ENCODE measurements at regions of chr6 and their contacts with region 1.

Region 1: GRCh38 chr6:116287689-116288282 is 8.1 kb upstream of the TSPYL1 start:
- DNase-seq: no peak
- CTCF ChIP-seq: peak; percentile 87

Region 2: GRCh38 chr6:116175344-116175743 is 112.4 kb before region 1 on chr6:
- CTCF ChIA-PET with region 1: no interaction called
- POLR2A ChIA-PET with region 1: no interaction called
- DNase-seq: no peak
- CTCF ChIP-seq: no peak

Region 3: GRCh38 chr6:116304538-116305097 is 16.8 kb after region 1 on chr6:
- CTCF ChIA-PET with region 1: interaction called, 26 read pairs
- POLR2A ChIA-PET with region 1: no interaction called
- DNase-seq: no peak
- CTCF ChIP-seq: no peak

Region 4: DNA sequence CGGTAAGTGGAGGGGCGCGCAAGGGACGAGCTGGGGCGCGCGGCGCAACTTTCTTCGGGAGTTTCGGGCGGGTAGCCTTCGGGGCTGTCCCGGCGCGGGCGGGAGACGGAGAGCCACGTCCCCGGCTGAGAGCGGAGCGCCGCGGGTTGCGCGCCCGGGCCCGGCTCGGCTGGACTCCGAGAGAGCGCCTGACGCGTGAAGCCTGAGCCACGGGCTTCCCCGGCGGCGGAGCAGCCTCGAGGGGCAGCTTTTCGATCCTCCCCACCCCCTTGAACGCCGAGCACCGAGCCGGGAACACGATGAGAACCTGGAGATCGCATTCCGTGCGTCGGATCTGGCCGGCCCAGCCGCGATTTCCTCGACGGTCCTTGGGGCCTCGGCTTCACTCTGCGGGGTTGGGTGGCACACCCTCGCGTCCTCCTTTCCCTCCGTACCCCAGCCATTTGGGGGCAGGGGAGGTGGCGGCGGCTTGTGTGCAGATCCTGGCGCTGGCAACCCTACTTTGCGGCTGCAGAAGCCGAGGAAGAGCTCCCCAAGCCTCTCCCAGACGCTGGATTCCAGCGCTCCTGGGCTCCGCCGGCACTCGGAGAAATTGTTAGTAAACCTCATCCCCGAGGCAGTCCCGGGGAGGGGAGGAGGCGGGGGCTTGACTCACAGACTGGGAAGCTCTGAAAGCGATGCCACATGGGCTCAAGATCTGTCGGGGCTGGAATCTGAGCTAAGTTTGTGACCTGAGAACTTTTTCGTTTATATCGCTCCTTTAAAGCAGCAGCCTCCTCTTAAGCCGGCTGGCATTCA is 83.5 kb after region 1 on chr6:
- CTCF ChIA-PET with region 1: interaction called, 18 read pairs
- POLR2A ChIA-PET with region 1: no interaction called
- DNase-seq: peak; percentile 74
- CTCF ChIP-seq: no peak

Region 5: DNA sequence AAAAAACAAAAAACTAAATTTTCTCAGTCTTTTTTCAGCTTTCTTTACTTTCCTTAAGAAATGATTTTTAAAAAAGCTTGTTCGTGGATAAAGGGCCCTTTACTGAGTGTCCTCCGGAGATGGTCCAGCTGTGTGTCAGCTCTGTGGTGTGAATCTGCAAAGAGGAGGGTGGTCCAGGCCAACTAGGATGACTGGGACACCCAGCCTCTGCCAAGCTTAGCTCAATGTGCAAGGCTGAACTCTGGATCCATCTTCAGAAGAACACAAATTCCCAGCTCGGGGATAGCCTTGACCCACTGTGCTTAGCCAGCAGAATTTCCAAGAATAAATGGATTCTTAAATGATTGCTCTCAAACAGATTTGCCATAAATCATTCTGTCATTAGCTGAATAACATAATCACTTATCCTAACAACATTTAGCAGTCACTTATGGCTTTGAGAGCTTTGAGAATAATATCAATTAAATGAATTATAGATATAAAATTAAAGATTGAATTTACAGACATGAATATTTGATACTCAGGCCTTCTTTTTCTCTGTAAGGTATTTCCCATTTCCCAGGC is 209.4 kb after region 1 on chr6:
- CTCF ChIA-PET with region 1: interaction called, 15 read pairs
- POLR2A ChIA-PET with region 1: no interaction called
- DNase-seq: no peak
- CTCF ChIP-seq: no peak

Region 6: GRCh38 chr6:116542426-116542825 is 254.6 kb after region 1 on chr6:
- CTCF ChIA-PET with region 1: interaction called, 30 read pairs
- POLR2A ChIA-PET with region 1: no interaction called
- DNase-seq: no peak
- CTCF ChIP-seq: no peak

Measured in GM10248 (cell line).